ENCODE measurements at regions of chr6 and their contacts with region 1.

Region 1: GRCh38 chr6:167543602-167544497 is 219.0 kb downstream of the TTLL2 start:
- DNase-seq: peak in 1 of 2 donors; percentile 63
- ATAC-seq: peak; percentile 72
- H3K4me3 ChIP-seq: no peak overlapping the region
- H3K27ac ChIP-seq: peak overlapping the region; percentile 92 to 93
- H3K4me1 ChIP-seq: peaks cover 0 to 6% of the 10 kb centered on the region in 2 donors
- H3K27me3 ChIP-seq: no peaks in the 10 kb centered on the region

Region 2: GRCh38 chr6:167396659-167397490 is 147.0 kb before region 1 on chr6:
- intact Hi-C with region 1: loop called in 1 of 2 experiments (anchors 10 kb)
- DNase-seq: no peak
- ATAC-seq: no peak
- H3K4me3 ChIP-seq: no peak overlapping the region
- H3K27ac ChIP-seq: no peak overlapping the region
- H3K4me1 ChIP-seq: no peaks in the 10 kb centered on the region
- H3K27me3 ChIP-seq: no peaks in the 10 kb centered on the region

Region 3: DNA sequence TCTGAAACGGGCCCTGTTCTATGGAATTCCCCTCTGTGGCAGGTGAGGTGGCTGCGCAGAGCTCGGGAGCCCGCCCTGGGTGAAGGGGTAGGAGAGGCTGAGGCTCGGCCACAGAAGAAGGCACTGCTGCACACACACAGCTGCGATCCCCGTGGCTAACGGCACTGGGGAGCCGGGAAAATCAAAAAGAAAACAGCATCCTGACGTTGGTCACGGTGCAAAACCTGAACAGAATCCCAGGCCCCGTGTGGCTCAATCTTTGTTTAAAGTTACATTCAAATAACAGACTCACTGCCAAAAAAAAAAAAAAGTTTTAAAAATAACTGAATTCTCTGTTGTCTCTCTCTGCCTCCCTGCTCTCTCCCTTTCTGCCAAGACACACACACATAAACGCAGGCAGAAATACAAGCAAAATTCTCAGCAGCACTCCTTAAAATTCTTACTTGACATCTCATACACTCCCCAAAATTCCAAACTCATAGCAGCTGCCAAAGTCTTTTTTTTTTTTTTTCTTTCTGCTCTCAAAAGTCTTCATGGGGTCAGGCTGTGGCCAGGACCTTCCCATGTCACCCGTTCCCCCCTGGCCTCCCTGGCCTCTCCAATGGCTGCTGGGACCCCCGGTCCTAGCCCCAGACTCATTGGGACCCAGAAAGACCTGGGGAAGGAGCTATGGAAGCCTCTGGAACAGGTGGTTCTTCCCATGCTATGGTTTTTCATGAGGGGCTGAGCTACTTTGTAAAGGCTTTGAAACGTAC is 29.8 kb after region 1 on chr6:
- intact Hi-C with region 1: loop called in 1 of 2 experiments (anchors 2 kb)
- DNase-seq: no peak
- ATAC-seq: peak; percentile 61
- H3K4me3 ChIP-seq: no peak overlapping the region
- H3K27ac ChIP-seq: peak overlapping the region; percentile 59 to 97
- H3K4me1 ChIP-seq: no peaks in the 10 kb centered on the region
- H3K27me3 ChIP-seq: no peaks in the 10 kb centered on the region

Measured in aorta (tissue), 5 donors.